GM18951 (cell line): ENCODE measurements at regions of chr1 and their contacts with region 1.

Region 1: DNA sequence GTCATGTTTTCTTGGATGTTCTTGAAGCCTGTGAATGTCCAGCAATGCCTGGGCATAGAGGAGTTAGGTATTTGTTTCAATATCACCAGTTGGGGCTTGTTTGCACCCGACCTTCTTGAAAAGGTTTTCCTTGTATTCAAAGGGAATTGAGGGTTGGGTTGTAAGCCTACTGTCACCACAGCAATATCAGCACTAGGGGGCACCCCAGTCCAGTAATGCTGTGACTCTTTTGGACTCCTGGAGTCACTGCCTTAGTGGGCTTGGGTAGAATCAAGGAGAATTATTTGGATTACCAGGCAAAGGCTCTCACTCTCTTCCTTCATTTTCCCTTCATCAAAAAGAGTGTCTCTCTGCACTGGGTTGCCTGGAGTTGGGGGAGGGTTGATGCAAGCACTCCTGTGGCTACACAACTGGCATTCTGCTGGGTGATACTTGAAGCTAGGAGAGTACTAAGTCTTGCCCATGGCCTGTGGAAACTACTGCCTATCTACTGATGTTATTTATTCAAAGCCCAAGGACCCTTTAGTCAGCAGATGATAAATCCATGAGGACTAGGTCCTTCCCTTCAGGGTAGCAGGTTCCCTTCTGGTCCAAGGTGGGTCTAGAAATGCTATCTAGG is 34.5 kb downstream of the OR10R2 start:
- POLR2A ChIP-seq: no peak

Region 2: GRCh38 chr1:158203693-158204457 is 302.6 kb before region 1 on chr1:
- in situ Hi-C with region 1: loop called (anchors 25 kb)
- POLR2A ChIP-seq: no peak

Region 3: DNA sequence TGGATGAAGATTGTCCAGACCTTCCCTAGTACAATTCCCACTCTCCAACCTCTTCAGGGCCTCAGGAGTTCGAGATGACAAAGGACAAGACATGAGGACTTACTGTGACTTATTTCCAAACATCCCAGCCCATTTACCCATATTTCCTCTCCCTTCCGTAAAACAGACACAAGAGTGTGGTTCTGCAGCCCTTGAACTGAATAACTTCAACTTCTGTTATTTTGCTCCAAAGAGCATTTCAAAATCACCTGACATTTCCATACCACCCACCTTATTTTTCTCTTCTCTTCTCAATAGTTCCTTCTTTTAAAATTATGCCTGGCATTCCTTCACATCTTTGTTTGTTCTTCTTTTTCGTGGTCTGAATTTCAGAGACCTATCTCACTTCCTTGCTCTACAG is 71.7 kb before region 1 on chr1:
- in situ Hi-C with region 1: no loop called
- POLR2A ChIP-seq: no peak

Region 4: GRCh38 chr1:158564608-158565007 is 58.1 kb after region 1 on chr1:
- in situ Hi-C with region 1: no loop called
- POLR2A ChIP-seq: no peak

Region 5: GRCh38 chr1:158998781-158999161 is 492.3 kb after region 1 on chr1:
- in situ Hi-C with region 1: loop called (anchors 25 kb)
- POLR2A ChIP-seq: no peak